ENCODE measurements at regions of chr14 and their contacts with region 1.

Region 1: DNA sequence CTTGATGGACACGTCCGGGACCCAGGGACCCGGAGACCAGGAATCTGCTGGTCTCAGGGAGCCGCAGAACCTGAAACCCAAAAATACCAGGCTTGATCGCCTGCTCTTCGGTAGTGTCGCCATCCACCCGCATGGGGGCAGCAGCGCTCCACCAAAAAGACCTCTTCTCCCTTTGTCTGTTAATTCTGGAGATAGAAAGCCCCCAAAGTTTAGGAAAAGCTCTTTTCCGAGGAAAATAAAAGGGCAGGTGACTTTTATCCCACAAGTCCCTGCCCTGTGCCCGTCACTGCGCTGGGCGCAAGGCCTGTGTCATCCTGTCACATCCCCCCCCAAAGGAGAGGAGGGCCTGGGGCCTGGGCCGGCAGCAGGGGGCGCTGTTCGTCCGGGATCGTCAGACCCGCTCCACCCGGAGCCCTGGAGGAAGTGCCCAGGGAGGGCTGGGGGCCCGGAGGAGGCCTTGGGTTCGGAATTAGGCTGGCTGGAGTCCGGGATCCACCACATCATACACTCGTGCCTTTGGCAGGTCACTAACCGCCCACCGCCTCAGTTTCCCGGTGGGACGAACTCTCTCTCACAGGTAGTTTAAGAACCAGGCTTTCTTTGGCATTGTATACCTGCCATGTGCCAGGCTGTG is 31.9 kb downstream of the DAD1 start:
- DNase-seq: peak; percentile 95
- H3K4me3 Mint-ChIP-seq: peak overlapping the region; percentile 74
- H3K27ac Mint-ChIP-seq: peak overlapping the region; percentile 97
- H3K4me1 Mint-ChIP-seq: peaks cover 84% of the 10 kb centered on the region
- H3K27me3 Mint-ChIP-seq: no peaks in the 10 kb centered on the region

Region 2: DNA sequence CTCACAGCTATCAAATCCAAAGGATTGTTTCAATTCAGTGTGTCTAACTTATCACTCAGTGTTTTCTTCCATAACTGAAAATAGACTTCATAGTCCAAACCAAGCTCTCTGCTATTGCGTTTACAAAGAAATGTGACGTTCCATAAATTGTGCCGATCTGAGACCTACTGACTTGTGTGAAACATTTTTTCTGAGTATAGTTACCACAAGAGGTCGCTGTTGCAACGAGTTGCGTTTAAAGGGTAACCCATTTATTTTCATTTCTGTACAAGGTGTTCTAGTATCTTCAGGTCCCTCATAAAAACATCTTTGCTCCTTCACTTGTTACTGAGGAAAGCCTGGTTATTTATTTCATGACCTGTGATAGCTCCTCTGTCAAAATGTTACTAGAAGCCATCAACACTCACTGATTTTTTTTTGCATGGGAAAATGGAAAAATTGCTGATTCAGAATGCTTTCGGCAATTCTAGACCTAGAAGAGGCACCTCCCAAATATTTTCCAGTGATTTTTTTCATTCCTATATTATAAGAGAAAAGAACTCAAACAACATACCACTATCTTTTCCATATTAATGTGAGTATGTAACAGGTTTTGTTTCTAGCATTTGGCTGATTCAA is 822.5 kb before region 1 on chr14:
- CTCF ChIA-PET with region 1: no interaction called
- intact Hi-C with region 1: loop called (anchors 5 kb)
- DNase-seq: peak; percentile 66
- H3K4me3 Mint-ChIP-seq: peak overlapping the region; percentile 61
- H3K27ac Mint-ChIP-seq: peak overlapping the region; percentile 65
- H3K4me1 Mint-ChIP-seq: peaks cover 16% of the 10 kb centered on the region
- H3K27me3 Mint-ChIP-seq: peaks cover 16% of the 10 kb centered on the region

Region 3: DNA sequence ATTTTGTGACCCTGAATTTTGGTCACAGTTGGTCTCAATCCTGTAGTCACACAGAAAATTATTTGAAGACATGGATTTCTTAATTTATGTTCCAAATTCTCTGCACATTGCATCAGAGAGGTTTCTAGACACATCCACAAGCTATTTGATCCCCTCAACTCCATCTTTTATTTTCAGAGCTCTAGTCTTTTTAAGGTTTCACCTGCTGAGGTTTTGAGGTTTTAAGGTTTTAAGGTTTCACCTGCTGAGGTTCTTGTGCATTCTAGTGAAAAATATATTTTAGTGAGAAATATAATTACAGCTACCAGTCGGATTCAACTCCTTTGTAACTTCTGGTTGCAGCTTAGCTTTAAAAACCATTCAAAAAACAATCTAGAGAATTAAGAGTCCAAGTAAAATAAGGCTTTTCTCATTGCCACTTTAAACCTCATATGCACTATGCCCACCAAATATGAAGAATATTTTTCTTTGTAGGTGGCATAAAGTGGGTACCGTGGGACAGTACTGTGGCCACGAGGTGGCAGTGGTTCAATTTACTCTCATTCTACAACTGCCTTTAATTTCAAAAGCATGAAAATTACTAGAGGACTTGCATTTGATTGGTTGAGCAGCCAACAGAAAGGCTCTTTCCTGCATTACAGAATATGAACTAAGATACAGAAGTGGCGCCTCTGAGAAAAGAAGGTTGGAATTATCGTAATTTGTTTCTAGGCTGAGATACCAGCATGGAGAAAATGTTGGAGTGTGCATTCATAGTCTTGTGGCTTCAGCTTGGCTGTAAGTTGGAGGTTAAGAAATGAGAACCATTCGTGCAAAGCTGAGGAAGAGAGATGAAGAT is 517.0 kb before region 1 on chr14:
- CTCF ChIA-PET with region 1: no interaction called
- intact Hi-C with region 1: loop called (anchors 2 kb)
- DNase-seq: peak; percentile 70
- H3K4me3 Mint-ChIP-seq: peak overlapping the region; percentile 69
- H3K27ac Mint-ChIP-seq: peak overlapping the region; percentile 90
- H3K4me1 Mint-ChIP-seq: peaks cover 16% of the 10 kb centered on the region
- H3K27me3 Mint-ChIP-seq: no peaks in the 10 kb centered on the region

Region 4: DNA sequence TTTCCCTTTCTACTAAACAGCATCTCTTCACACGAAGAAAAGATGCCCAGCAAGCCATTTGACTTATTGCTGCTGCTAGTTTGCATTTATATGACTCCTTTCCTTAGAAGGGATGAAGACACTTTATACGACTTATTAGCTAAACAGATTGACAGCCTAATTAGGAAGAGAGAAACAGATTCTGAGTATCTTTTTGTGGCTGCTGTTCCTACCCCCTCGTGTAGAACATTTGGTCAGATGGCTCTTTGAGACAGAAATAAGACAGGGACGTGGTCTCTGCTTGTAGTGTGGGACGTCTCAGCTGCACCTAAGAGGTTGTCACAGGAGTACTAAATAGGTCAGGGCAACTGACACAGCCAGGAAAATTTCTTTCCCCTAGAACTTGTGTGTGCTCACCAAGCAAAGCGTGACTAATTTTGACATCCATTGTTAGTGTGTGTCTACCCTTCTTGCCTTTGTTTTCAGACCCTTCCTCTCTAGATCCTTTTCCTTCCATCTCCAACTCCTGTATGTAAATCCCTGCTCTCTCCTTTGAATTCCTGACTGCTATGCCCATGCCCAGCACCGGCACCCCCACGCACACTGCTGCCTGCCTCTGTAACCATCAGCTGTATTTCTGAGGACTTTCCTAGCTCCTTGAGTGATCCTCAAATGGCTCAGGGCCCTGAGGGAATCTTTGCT is 51.3 kb before region 1 on chr14:
- CTCF ChIA-PET with region 1: interaction called, 20 read pairs
- intact Hi-C with region 1: loop called (anchors 1 kb)
- DNase-seq: no peak
- H3K4me3 Mint-ChIP-seq: peak overlapping the region; percentile 84
- H3K27ac Mint-ChIP-seq: peak overlapping the region; percentile 98
- H3K4me1 Mint-ChIP-seq: peaks cover 22% of the 10 kb centered on the region
- H3K27me3 Mint-ChIP-seq: no peaks in the 10 kb centered on the region

Region 5: GRCh38 chr14:22589096-22589839 is 32.2 kb after region 1 on chr14 and contains the start of gene DAD1:
- CTCF ChIA-PET with region 1: interaction called, 27 read pairs
- intact Hi-C with region 1: loop called (anchors 1 kb)
- DNase-seq: peak; percentile 100
- H3K4me3 Mint-ChIP-seq: peak within 1 kb of the TSS; percentile 98
- H3K27ac Mint-ChIP-seq: peak within 1 kb of the TSS; percentile 99
- H3K4me1 Mint-ChIP-seq: peaks cover 68% of the 10 kb centered on the region
- H3K27me3 Mint-ChIP-seq: no peaks in the 10 kb centered on the region
- total RNA-seq, gene DAD1: 219 to 226 TPM

Region 6: DNA sequence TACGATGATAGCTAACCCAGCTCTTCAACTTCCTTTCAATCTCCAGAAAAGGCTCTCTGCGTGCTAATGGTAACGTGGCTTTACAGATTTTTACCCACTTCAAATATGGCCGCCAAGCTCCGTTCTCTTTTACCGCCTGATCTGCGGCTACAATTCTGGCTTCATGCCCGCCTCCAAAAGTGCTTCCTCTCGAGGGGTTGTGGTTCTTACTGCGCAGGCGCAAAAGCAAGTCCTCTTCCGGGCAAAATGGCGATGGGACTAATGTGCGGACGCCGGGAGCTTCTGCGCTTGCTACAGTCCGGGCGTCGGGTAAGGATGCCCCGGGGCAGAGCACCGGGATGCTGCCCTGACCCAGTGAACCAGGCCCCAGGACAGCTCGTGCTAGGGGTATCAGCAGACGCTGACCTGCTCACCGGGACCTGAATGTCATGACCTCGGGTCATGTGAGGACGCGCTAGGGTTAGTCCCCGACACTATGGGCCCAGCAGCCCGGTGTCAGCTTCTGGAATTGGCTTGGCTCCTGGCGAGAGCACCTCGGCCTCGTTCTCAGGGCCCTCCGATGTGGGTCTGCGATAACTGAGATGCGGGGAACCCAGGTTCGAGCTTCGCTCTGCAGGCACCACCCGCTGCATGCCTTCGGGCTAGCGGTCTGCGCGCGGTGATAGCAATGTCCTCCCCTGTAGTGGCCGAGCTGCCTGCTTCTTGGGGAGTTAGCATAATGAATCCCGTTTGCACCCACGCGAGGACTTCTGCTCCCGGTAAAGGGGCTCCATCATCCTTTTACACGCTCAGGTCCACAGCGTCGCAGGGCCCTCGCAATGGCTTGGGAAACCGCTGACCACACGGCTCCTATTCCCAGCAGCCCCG is 209.6 kb after region 1 on chr14 and contains the start of gene OXA1L:
- CTCF ChIA-PET with region 1: interaction called, 8 read pairs
- intact Hi-C with region 1: loop called (anchors 1 kb)
- DNase-seq: peak; percentile 99
- H3K4me3 Mint-ChIP-seq: peak within 1 kb of the TSS; percentile 83
- H3K27ac Mint-ChIP-seq: peak within 1 kb of the TSS; percentile 95
- H3K4me1 Mint-ChIP-seq: peaks cover 31% of the 10 kb centered on the region
- H3K27me3 Mint-ChIP-seq: no peaks in the 10 kb centered on the region
- total RNA-seq, gene OXA1L: 149 to 152 TPM

Region 7: GRCh38 chr14:23076785-23077408 is 519.8 kb after region 1 on chr14:
- CTCF ChIA-PET with region 1: no interaction called
- intact Hi-C with region 1: no loop called
- DNase-seq: peak; percentile 37
- H3K4me3 Mint-ChIP-seq: no peak overlapping the region
- H3K27ac Mint-ChIP-seq: no peak overlapping the region
- H3K4me1 Mint-ChIP-seq: peaks cover 9% of the 10 kb centered on the region
- H3K27me3 Mint-ChIP-seq: no peaks in the 10 kb centered on the region